Posterior vena cava (tissue), 2 donors: ENCODE measurements at regions of chr17 and their contacts with region 1.

Region 1: GRCh38 chr17:50653738-50654137 is 19.1 kb downstream of the ABCC3 start:
- DNase-seq: no peak

Region 2: GRCh38 chr17:50630524-50631194 is 23.1 kb before region 1 on chr17:
- intact Hi-C with region 1: no loop called
- DNase-seq: no peak

Region 3: DNA sequence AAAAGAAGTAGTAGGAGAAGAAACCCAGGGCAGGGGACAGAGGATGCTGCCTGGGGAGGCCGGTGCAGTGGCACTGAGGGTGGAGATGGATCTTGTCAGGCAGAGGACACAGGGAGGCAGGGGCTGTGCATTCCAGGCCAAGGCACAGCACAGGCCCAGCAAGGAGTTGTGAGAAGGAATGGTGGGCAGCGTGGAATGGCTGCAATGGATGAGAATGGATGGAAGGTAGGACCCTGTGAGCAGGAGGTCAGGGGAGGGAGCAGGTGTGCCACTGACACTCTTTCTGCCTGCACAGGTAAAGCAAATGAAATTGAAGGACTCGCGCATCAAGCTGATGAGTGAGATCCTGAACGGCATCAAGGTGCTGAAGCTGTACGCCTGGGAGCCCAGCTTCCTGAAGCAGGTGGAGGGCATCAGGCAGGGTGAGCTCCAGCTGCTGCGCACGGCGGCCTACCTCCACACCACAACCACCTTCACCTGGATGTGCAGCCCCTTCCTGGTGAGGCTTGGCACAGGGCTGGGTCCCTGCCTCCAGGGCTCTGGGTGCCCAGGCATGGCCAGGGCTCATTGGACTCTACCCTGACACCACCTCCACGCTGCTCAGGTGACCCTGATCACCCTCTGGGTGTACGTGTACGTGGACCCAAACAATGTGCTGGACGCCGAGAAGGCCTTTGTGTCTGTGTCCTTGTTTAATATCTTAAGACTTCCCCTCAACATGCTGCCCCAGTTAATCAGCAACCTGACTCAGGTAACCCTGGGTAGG is 13.7 kb after region 1 on chr17:
- intact Hi-C with region 1: loop called in 1 of 2 experiments (anchors 1 kb)
- DNase-seq: no peak